PC-9 (cell line): ENCODE measurements at regions of chr14 and their contacts with region 1.

Region 1: DNA sequence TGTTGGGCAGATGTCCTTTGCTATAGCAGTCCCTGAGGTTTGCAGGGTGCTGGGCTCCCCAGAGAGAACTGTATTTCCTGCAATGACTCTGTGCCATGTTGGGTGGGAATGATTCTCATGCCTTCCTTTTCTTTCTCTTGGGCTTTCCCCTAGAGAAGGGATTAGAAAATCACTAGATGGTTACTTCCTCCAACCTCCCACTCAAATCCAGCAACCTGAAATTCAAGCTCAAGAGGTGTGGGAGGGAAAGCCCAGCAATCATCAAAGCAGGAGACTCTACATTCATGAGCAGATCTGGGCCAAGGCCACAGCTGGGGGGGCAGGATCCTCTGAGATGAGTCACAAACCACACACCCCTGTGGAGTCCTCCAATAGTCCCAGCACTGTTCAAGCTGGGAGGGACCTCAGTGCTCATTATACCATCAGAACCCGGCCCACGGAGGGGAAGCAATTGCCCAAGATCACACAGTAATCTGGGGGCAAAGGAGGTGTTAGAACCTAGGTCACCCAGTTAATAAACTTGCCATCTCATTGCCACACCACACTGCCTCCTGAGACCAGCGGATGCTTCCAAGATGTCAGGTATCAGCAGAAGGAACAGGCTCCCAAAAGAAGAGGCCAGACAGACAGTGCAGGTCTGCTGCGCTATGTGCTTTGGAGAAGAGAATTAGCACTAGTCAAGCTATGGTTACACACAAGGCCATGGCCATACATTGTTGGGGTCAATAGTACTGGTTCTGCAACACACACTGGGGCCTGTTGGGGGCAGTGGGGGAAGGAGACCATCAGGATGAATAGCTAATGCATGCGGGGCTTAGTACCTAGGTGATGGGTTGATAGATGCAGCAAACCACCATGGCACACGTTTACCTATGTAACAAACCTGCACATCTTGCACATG is 65.7 kb downstream of the TTC9 start:
- DNase-seq: peak; percentile 81 to 92
- H3K4me3 ChIP-seq: no peak overlapping the region
- H3K27ac ChIP-seq: peak overlapping the region; percentile 67
- H3K4me1 ChIP-seq: peaks cover 22% of the 10 kb centered on the region
- H3K27me3 ChIP-seq: no peaks in the 10 kb centered on the region
- CTCF ChIP-seq: no peak

Region 2: GRCh38 chr14:70448633-70449340 is 258.6 kb before region 1 on chr14:
- CTCF ChIA-PET with region 1: no interaction called
- POLR2A ChIA-PET with region 1: no interaction called
- intact Hi-C with region 1: no loop called
- DNase-seq: peak in 1 of 2 experiments; percentile 60
- H3K4me3 ChIP-seq: no peak overlapping the region
- H3K27ac ChIP-seq: no peak overlapping the region
- H3K4me1 ChIP-seq: no peaks in the 10 kb centered on the region
- H3K27me3 ChIP-seq: no peaks in the 10 kb centered on the region
- CTCF ChIP-seq: no peak

Region 3: GRCh38 chr14:70640938-70641547 is 66.3 kb before region 1 on chr14:
- CTCF ChIA-PET with region 1: no interaction called
- POLR2A ChIA-PET with region 1: no interaction called
- intact Hi-C with region 1: loop called (anchors 2 kb)
- DNase-seq: peak; percentile 47 to 77
- H3K4me3 ChIP-seq: peak overlapping the region; percentile 97
- H3K27ac ChIP-seq: 0 out of 2 replicates have a peak overlapping the region, but pooled peaks have one; percentile 1
- H3K4me1 ChIP-seq: peaks cover 32% of the 10 kb centered on the region
- H3K27me3 ChIP-seq: no peaks in the 10 kb centered on the region
- CTCF ChIP-seq: no peak

Region 4: GRCh38 chr14:70671652-70672644 is 35.4 kb before region 1 on chr14:
- CTCF ChIA-PET with region 1: no interaction called
- POLR2A ChIA-PET with region 1: interaction called, 11 read pairs
- intact Hi-C with region 1: no loop called
- DNase-seq: no peak
- H3K4me3 ChIP-seq: no peak overlapping the region
- H3K27ac ChIP-seq: no peak overlapping the region
- H3K4me1 ChIP-seq: peaks cover 8% of the 10 kb centered on the region
- H3K27me3 ChIP-seq: no peaks in the 10 kb centered on the region
- CTCF ChIP-seq: no peak

Region 5: DNA sequence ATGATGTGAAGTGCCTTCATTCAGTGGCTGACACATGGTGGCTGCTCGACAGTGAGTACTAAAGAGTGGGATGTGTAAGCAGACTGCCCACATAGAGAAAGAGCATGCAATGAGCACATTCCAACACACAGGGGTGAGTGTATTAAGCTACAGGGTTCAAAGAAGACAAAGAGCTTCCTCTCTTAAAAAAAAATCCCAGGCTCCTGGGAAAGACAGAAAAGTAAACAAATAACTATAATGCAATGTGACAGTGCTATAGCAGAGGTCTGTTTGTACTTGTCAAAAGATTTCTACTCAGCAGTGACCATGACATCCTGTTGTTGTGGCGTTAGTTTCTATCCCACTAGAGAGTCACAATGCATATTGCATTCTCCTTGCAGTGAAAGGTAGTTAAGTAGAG is 187.5 kb after region 1 on chr14:
- CTCF ChIA-PET with region 1: no interaction called
- POLR2A ChIA-PET with region 1: interaction called, 14 read pairs
- intact Hi-C with region 1: no loop called
- DNase-seq: no peak
- H3K4me3 ChIP-seq: no peak overlapping the region
- H3K27ac ChIP-seq: no peak overlapping the region
- H3K4me1 ChIP-seq: 0 out of 2 replicates have a peak, but pooled peaks cover 6% of the 10 kb centered on the region
- H3K27me3 ChIP-seq: no peaks in the 10 kb centered on the region
- CTCF ChIP-seq: no peak